ENCODE measurements at regions of chr12 and their contacts with region 1.

Region 1: DNA sequence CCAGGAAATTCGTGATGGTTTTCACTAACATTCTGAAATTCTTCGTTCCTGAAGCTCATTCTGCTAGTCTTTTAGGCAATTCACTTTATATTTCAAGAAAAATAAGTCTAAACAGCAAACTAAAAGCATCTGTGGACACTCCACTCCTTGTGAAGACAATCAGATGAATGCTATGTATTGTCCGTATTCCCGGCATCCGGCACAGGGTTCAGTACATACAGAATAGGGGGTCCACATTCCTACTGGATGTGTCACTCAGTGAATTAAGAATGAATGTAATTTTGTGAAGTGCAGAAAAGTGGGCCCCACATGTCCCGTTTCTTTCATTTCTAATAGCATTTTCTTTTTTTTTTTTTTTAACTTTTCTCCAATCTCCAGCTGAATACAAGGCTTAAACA is 241.3 kb downstream of the GRIN2B start:
- DNase-seq: no peak
- ATAC-seq: no peak
- H3K4me3 ChIP-seq: no peak overlapping the region
- H3K27ac ChIP-seq: no peak overlapping the region
- H3K4me1 ChIP-seq: no peaks in the 10 kb centered on the region
- H3K27me3 ChIP-seq: 0 out of 4 replicates have a peak, but pooled peaks cover 0 to 3% of the 10 kb centered on the region in 2 experiments
- CTCF ChIP-seq: no peak
- EP300 ChIP-seq: no peak
- POLR2A ChIP-seq: no peak
- RAD21 ChIP-seq: no peak

Region 2: DNA sequence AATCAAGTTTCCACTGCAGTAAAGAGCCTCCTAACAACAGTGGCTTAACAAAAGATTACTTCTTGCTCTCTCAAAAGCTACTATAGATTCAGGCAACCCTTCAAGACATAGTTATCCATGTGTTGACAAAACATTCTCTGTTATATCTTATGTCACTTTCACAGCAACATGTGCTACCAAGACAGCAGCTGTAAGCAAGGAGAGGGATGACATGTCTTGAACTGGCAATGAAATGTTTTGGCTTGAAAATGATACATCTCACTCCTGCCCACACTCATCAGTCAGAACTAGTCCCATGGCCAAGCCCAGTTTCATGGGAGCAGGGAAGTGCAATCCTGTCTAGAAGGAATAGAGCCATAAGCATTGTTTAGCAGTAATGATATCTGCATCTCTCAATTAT is 252.0 kb after region 1 on chr12:
- CTCF ChIA-PET with region 1: no interaction called
- POLR2A ChIA-PET with region 1: interaction called, 10 read pairs
- RAD21 ChIA-PET with region 1: no interaction called
- SMC1A ChIA-PET with region 1: no interaction called
- in situ Hi-C with region 1: no loop called
- intact Hi-C with region 1: no loop called
- DNase-seq: no peak
- ATAC-seq: no peak
- H3K4me3 ChIP-seq: no peak overlapping the region
- H3K27ac ChIP-seq: no peak overlapping the region
- H3K4me1 ChIP-seq: no peaks in the 10 kb centered on the region
- H3K27me3 ChIP-seq: no peaks in the 10 kb centered on the region
- CTCF ChIP-seq: no peak
- EP300 ChIP-seq: no peak
- POLR2A ChIP-seq: no peak
- RAD21 ChIP-seq: no peak

Region 3: DNA sequence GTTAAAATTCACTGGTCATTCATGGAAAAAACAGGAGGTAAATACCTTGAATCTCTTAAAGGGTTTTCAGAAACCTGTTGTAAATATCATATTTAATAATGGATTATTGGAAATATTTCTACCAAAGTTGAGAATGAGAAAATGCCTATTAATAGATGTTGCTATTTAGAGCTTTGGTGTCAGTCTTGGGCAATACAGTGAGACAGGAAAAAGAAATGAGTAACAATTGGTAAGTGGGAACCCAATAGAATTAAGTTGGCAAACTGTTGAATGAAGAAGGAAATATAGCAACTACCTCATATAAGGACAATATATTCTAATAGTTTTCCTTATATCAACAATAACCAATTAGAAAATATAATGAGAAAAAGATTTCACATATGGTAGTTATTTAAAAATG is 703.4 kb after region 1 on chr12:
- CTCF ChIA-PET with region 1: no interaction called
- POLR2A ChIA-PET with region 1: no interaction called
- RAD21 ChIA-PET with region 1: no interaction called
- SMC1A ChIA-PET with region 1: no interaction called
- in situ Hi-C with region 1: no loop called
- intact Hi-C with region 1: no loop called
- DNase-seq: no peak
- ATAC-seq: no peak
- H3K4me3 ChIP-seq: no peak overlapping the region
- H3K27ac ChIP-seq: no peak overlapping the region
- H3K4me1 ChIP-seq: no peaks in the 10 kb centered on the region
- H3K27me3 ChIP-seq: no peaks in the 10 kb centered on the region
- CTCF ChIP-seq: no peak
- EP300 ChIP-seq: no peak
- POLR2A ChIP-seq: no peak
- RAD21 ChIP-seq: no peak